Caco-2 (cell line): ENCODE measurements at regions of chr5 and their contacts with region 1.

Region 1: DNA sequence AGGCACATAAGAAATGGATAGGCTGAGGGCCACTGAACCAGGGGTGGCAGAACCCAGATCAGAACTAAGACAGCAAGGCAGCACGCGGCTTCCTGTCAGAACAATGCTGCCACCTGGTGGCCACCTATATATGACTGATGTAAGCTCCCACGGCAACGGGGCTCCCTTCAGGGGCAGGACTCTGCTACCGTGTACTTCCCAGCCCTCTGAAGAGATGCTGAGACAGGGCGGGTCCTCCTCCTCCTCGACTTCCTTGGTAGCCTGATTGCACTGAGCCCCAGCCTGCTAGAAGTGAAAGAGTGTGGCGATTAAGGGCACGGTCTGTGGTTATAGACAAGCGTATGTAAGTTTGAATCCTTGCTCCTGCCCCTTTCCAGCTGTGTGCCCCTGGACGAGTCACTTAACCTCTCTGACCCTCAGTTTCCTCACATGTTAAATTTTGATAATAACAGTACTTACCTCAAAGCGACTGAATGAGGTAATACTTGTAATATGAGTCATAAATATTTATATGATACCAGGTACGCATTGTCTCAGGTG is 13.3 kb downstream of the RPS14 start:
- DNase-seq: peak; percentile 89 to 92
- H3K4me3 ChIP-seq: no peak overlapping the region
- H3K4me3 Mint-ChIP-seq: no peak overlapping the region
- H3K27ac Mint-ChIP-seq: no peak overlapping the region
- H3K4me1 ChIP-seq: no peaks in the 10 kb centered on the region
- H3K4me1 Mint-ChIP-seq: no peaks in the 10 kb centered on the region
- H3K27me3 ChIP-seq: no peaks in the 10 kb centered on the region
- H3K27me3 Mint-ChIP-seq: no peaks in the 10 kb centered on the region
- CTCF ChIP-seq: peak; percentile 88 to 90

Region 2: DNA sequence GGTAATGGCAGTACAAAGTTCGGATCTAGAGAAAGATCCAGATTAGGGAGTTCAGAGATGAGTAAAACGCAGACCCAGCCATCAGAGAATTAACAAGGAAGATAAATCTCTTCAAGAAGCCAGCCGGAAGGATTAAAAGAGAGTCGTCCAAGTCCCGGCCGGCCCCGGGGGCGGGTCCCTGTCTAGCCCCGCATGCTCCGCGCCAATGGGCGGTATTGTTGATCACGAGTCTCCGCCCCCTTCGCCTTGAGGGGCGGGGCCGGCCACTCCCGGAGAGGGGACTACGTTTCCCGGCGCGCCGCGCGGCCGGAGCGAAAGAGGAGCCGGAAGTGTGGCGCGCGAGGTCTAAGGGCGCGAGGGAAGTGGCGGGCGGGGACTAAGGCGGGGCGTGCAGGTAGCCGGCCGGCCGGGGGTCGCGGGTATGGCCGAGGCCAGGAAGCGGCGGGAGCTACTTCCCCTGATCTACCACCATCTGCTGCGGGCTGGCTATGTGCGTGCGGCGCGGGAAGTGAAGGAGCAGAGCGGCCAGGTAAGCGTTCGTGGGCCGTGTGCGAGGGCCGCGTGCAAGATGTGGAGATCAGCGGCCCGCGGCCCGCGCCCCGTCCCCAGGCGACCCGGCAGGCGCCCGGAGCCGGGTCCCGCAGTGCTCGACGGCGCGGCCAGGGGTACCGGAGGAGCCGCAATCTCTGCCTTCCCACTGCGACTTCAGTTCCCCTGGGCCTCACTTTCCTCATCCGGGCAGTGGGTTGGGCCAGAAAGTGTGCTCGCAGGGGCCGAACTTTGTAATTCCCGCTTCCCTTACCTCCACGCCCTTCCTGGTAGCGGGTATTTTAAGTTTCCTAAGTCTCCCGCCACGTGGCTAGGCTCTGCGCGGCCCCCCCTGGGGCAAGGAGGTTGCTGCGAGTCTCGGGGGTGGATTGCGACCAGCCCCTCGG is 78.6 kb before region 1 on chr5 and contains the start of gene TCOF1:
- CTCF ChIA-PET with region 1: no interaction called
- POLR2A ChIA-PET with region 1: interaction called, 4 read pairs
- intact Hi-C with region 1: loop called (anchors 2 kb)
- DNase-seq: peak; percentile 96 to 99
- H3K4me3 ChIP-seq: peak within 1 kb of the TSS; percentile 98
- H3K4me3 Mint-ChIP-seq: peak within 1 kb of the TSS; percentile 79
- H3K27ac Mint-ChIP-seq: peak within 1 kb of the TSS; percentile 80
- H3K4me1 ChIP-seq: peaks cover 23% of the 10 kb centered on the region
- H3K4me1 Mint-ChIP-seq: peaks cover 21% of the 10 kb centered on the region
- H3K27me3 ChIP-seq: no peaks in the 10 kb centered on the region
- H3K27me3 Mint-ChIP-seq: no peaks in the 10 kb centered on the region
- CTCF ChIP-seq: no peak
- total RNA-seq, gene TCOF1: 112 and 123 TPM in 2 replicates

Region 3: DNA sequence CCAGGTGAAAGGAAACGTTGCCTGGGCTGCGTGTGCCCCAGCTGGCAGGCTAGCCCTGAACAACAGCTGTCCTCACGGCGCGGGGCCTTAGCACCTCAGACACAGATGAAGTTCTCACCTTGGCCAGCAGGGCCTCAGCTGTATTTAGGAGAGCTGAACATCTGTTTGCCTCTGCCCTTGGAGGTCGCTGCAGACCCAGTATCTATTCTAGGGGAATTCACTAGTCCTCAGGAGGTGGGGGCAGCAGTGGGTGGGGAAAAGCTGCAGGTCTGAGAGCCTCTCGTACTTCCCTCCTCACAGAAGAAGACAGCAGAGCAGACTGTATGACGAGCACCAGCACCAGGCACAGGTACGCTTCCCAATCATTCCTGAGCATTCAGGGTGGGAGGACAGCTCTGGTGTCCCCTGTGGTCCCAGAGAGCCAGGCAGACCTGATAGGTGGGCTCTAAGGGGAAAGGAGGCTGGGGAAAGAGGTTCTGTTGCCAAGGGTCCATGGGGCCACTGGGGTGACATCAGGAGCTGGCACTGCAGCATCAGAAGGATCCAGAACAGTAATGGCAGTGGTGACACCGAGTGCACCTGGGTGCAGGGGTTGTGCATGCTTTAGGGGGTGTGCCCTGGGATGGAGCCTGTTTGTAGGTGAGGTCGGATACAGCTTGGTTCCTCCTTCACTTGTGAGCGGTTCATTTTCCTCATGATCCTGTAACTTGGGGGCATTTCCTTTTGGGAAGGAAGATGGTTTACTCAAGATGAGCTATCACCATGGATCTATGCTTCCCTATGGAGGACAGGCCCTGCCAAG is 37.3 kb before region 1 on chr5:
- CTCF ChIA-PET with region 1: interaction called, 17 read pairs
- POLR2A ChIA-PET with region 1: no interaction called
- intact Hi-C with region 1: loop called (anchors 1 kb)
- DNase-seq: peak in 1 of 2 experiments; percentile 30
- H3K4me3 ChIP-seq: no peak overlapping the region
- H3K4me3 Mint-ChIP-seq: no peak overlapping the region
- H3K27ac Mint-ChIP-seq: no peak overlapping the region
- H3K4me1 ChIP-seq: no peaks in the 10 kb centered on the region
- H3K4me1 Mint-ChIP-seq: no peaks in the 10 kb centered on the region
- H3K27me3 ChIP-seq: no peaks in the 10 kb centered on the region
- H3K27me3 Mint-ChIP-seq: no peaks in the 10 kb centered on the region
- CTCF ChIP-seq: peak; percentile 18 to 22